ENCODE measurements at regions of chr16 and their contacts with region 1.

Region 1: DNA sequence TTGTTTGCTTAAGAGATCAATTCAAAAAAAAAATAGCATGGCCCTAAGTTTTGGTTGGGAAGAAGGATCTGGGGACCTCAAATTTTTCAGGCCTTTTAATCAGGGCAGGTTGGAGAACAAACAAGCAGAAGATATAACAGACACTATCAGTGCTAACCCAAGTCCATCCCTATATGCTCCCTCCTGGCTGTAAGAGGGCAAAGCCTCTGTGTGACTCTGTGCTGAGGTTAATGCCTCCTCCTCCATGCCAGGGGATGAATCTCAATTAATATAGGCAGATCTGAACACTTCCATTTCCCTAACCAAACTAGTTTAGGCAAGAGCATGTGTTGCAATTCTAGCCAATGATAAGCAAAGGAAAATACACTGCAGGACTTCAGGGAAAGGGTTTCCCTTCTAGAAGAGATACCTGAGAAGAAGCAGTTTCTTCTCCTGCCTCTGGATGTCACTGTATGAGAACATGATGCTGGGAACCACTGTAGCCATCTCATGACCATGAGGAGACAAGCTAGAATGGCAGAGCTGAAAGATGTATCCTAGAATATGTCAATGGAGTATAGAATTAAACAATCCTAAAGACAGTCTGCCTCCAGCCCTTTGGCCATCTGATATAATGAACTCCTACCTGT is 76.0 kb downstream of the CHD9NB start:
- DNase-seq: no peak
- ATAC-seq: peak; percentile 57
- H3K4me3 ChIP-seq: no peak overlapping the region
- H3K27ac ChIP-seq: no peak overlapping the region
- H3K4me1 ChIP-seq: no peaks in the 10 kb centered on the region
- H3K27me3 ChIP-seq: peaks cover 0 to 8% of the 10 kb centered on the region in 2 donors
- CTCF ChIP-seq: peak in 1 of 2 donors; percentile 15

Region 2: GRCh38 chr16:53159781-53160436 is 183.3 kb after region 1 on chr16:
- intact Hi-C with region 1: loop called in 1 of 2 experiments (anchors 10 kb)
- DNase-seq: peak in 2 of 4 donors; percentile 26 to 55
- ATAC-seq: peak; percentile 70
- H3K4me3 ChIP-seq: no peak overlapping the region
- H3K27ac ChIP-seq: no peak overlapping the region
- H3K4me1 ChIP-seq: peaks cover 0 to 7% of the 10 kb centered on the region in 2 donors
- H3K27me3 ChIP-seq: no peaks in the 10 kb centered on the region
- CTCF ChIP-seq: peak; percentile 66 to 68

Measured in left lung (tissue), 14 donors.